Pancreas (tissue), 10 donors: ENCODE measurements at regions of chr1 and their contacts with region 1.

Region 1: GRCh38 chr1:211514030-211514754 is 22.2 kb upstream of the RD3 start:
- DNase-seq: peak; percentile 78 to 87 (median 84)
- ATAC-seq: peak; percentile 73 to 90 (median 80)
- H3K4me3 ChIP-seq: no peak overlapping the region
- H3K27ac ChIP-seq: peak overlapping the region in 1 of 4 donors; percentile 57
- H3K4me1 ChIP-seq: peaks cover 0 to 3% (median 0%) of the 10 kb centered on the region in 3 donors
- H3K27me3 ChIP-seq: no peaks in the 10 kb centered on the region
- CTCF ChIP-seq: peak; percentile 26 to 79 (median 58)

Region 2: GRCh38 chr1:211654838-211655787 is 140.9 kb after region 1 on chr1:
- intact Hi-C with region 1: loop called in 1 of 3 experiments (anchors 10 kb)
- DNase-seq: peak; percentile 79 to 98 (median 90)
- ATAC-seq: peak; percentile 97 to 100 (median 98)
- H3K4me3 ChIP-seq: no peak overlapping the region
- H3K27ac ChIP-seq: no peak overlapping the region
- H3K4me1 ChIP-seq: no peaks in the 10 kb centered on the region
- H3K27me3 ChIP-seq: no peaks in the 10 kb centered on the region
- CTCF ChIP-seq: peak; percentile 76 to 91 (median 84)